Activated CD8-positive, alpha-beta T cell treated with anti-CD3 and anti-CD28 coated beads for 36 hours (primary cell): ENCODE measurements at regions of chr1 and their contacts with region 1.

Region 1: GRCh38 chr1:65075123-65075976 is 72.7 kb upstream of the AK4 start:
- DNase-seq: peak; percentile 79
- ATAC-seq: peak; percentile 95
- H3K4me3 Mint-ChIP-seq: no peak overlapping the region
- H3K27ac Mint-ChIP-seq: no peak overlapping the region
- H3K4me1 Mint-ChIP-seq: peaks cover 10% of the 10 kb centered on the region
- H3K27me3 Mint-ChIP-seq: peaks cover 1% of the 10 kb centered on the region
- CTCF ChIP-seq: peak; percentile 84

Region 2: DNA sequence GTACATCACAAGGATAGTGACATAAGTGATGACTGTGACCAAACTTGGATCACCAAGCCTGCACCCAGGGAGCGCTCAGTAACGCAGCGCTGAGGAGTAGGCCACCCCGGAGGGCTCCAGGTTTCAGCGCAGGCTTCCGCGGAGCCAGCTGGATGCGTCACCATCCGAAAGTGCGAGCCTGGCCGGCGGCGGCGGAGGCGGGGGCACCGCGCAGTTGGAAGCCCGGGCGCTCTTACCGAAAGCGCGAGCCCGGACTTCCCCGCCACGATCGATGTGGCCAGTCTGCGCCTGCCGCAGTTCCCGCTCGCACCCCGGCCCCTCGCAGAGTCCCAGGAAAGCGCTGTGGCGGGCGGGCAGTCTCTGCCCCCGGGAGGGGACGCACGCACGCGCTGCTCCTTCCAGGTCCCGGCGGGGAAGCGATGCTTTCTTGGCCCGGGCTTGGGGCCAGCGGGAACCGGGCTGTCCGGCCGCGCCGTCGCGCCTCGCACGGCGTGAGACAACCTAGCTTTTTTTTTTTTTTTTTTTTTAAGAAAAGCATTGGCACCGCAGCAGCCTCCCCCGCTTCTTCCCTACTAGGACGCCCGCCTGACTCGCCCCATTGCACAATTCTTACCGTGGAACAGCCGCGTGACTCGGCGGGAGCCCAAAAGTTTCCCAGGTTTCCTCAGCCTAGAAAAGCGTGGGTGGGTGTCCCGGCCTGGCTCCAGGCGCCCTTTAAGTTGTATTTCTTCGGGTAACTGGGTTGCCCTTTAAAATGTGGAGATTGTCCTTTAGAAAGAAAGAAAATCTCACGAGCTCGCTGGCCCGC is 72.6 kb before region 1 on chr1:
- CTCF ChIA-PET with region 1: interaction called, 12 read pairs
- POLR2A ChIA-PET with region 1: no interaction called
- intact Hi-C with region 1: no loop called
- DNase-seq: peak; percentile 85
- ATAC-seq: peak; percentile 87
- H3K4me3 Mint-ChIP-seq: peak overlapping the region; percentile 57
- H3K27ac Mint-ChIP-seq: peak overlapping the region; percentile 67
- H3K4me1 Mint-ChIP-seq: peaks cover 27% of the 10 kb centered on the region
- H3K27me3 Mint-ChIP-seq: peaks cover 1% of the 10 kb centered on the region
- CTCF ChIP-seq: no peak

Region 3: DNA sequence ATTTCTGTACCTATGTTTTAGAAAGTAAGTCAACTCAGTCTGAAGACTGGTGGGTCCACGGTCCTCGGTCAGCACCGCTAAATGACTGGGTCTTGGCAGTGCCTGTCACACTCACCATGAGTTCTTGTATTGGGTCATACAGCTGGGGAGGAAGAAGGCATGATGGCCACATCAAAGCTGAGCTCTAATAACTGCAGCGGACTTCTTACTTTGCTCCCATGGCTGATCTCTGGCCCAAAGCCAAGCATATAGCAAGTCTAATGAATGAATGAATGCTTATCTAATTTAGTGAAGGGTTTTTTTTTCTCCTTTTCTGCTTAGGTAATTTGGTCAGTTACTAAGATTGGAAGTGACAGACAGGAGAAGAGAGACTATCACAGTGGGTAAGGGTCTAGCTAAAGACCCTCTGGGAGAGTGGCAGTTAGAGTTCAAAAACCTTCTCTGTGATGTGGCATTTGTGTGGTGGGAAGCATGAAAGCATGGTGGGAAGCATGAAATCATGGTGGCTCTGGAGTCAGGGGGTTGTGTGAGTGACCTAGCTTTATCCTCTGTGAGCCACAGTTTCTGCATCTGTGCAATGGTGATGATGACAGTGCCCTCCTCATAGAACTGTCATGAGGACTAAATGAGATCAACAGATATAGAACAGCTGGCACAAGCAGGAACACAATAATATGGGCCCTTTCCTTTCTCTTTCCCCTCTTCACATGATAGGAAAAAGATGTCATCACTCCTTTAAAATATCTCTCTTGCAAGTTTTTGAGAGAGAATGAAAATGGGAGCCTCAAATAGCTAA is 30.1 kb before region 1 on chr1:
- CTCF ChIA-PET with region 1: interaction called, 20 read pairs
- POLR2A ChIA-PET with region 1: no interaction called
- intact Hi-C with region 1: no loop called
- DNase-seq: no peak
- ATAC-seq: no peak
- H3K4me3 Mint-ChIP-seq: no peak overlapping the region
- H3K27ac Mint-ChIP-seq: no peak overlapping the region
- H3K4me1 Mint-ChIP-seq: peaks cover 31% of the 10 kb centered on the region
- H3K27me3 Mint-ChIP-seq: no peaks in the 10 kb centered on the region
- CTCF ChIP-seq: no peak

Region 4: DNA sequence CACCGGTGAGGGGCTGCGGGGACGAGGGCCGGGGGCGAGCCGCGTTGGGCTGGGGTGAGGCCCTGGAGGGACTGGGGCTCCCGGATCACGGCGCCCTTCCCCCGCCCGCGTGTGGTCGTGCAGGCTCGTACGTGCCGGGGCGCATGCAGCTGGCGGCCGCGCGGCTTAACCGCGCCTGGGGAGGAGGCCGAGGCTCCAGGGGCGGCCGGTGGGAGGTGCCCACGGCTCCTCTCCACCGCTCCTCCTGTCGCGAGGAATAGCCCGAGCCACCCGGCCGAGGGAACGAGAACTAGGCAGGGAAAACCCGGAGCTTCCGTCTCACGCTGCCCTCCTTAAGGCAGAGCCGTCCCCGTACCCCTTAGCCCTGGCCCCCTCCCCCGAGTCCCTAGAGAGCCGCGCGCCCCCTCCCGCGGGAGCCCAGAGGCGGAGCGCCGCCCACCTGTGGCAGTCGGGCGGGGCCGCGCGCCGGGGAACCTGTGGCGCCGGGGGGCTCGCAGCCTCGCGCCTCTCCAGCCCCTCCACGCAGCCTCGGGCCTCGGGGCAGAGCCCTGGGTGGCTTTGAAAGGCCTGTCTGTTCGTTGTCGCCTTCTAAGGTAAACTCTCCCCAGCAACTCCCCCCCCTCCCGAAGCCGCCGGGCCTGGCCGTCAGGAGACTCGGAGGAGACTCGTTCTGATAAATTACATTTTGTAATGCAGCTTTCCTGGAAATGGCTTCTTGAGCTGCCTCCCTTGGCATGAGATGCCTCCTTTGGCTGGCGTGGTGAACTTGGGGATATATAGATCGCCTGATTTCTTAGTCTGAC is 73.4 kb after region 1 on chr1:
- CTCF ChIA-PET with region 1: interaction called, 3 read pairs
- POLR2A ChIA-PET with region 1: no interaction called
- intact Hi-C with region 1: loop called (anchors 5 kb)
- DNase-seq: peak; percentile 87
- ATAC-seq: peak; percentile 76
- H3K4me3 Mint-ChIP-seq: peak overlapping the region; percentile 90
- H3K27ac Mint-ChIP-seq: peak overlapping the region; percentile 86
- H3K4me1 Mint-ChIP-seq: peaks cover 21% of the 10 kb centered on the region
- H3K27me3 Mint-ChIP-seq: peaks cover 35% of the 10 kb centered on the region
- CTCF ChIP-seq: no peak

Region 5: GRCh38 chr1:65193129-65193695 is 117.9 kb after region 1 on chr1:
- CTCF ChIA-PET with region 1: no interaction called
- POLR2A ChIA-PET with region 1: no interaction called
- intact Hi-C with region 1: no loop called
- DNase-seq: no peak
- ATAC-seq: no peak
- H3K4me3 Mint-ChIP-seq: no peak overlapping the region
- H3K27ac Mint-ChIP-seq: no peak overlapping the region
- H3K4me1 Mint-ChIP-seq: peaks cover 8% of the 10 kb centered on the region
- H3K27me3 Mint-ChIP-seq: no peaks in the 10 kb centered on the region
- CTCF ChIP-seq: no peak